ENCODE measurements at regions of chr21 and their contacts with region 1.

Region 1: DNA sequence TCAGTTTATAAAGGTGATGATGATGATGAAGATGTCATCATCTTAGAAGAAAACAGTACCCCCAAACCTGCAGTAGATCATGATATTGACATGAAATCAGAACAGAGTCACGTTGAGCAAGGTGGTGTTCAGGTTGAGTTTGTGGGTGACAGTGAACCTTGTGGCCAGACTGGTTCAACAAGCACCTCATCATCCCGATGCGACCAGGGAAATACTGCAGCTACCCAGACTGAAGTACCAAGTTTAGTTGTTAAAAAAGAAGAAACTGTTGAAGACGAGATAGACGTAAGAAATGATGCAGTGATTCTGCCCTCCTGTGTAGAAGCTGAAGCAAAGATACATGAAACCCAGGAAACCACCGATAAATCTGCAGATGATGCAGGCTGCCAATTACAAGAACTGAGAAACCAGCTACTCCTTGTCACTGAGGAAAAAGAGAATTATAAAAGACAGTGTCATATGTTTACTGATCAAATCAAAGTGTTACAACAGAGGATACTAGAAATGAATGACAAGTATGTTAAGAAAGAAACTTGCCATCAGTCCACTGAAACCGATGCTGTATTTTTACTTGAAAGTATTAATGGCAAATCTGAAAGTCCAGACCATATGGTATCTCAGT is 16.0 kb upstream of the CHAF1B start:
- DNase-seq: no peak
- ATAC-seq: no peak
- H3K4me3 ChIP-seq: no peak overlapping the region
- H3K27ac ChIP-seq: no peak overlapping the region
- H3K4me1 ChIP-seq: no peaks in the 10 kb centered on the region
- H3K27me3 ChIP-seq: no peaks in the 10 kb centered on the region
- CTCF ChIP-seq: no peak
- EP300 ChIP-seq: no peak
- POLR2A ChIP-seq: no peak
- RAD21 ChIP-seq: no peak

Region 2: DNA sequence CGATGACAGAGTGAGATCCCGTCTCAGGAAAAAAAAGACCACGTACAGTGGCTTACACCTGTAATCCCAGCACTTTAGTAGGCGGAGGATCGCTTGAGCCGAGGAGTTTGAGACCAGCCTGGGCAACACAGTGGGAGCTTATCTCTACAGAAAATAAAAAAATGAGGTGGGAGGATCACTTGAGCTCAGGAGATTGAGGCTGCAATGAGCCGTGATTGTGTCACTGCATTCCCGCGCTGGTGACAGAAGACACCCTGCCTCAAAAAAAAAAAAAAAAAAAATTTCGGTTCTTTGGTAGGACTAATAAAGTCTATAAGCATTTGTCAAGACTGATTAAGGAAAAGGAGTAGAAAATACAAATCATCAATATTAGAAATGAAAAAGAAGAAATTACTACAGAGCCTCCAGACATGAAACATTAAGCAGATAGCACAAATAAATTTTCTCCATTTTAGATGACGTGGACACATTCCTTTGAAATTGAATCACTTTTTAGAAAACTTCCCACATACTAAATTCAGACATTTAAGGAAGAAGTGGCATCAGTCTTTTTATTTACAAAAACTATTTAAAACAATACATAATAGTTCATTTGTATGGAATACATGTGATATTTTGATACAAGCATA is 18.8 kb before region 1 on chr21:
- CTCF ChIA-PET with region 1: no interaction called
- POLR2A ChIA-PET with region 1: interaction called, 16 read pairs
- in situ Hi-C with region 1: no loop called
- intact Hi-C with region 1: no loop called
- DNase-seq: no peak
- ATAC-seq: peak; percentile 37; the same call in 2 of the 3 replicates
- H3K4me3 ChIP-seq: no peak overlapping the region
- H3K27ac ChIP-seq: no peak overlapping the region
- H3K4me1 ChIP-seq: no peaks in the 10 kb centered on the region
- H3K27me3 ChIP-seq: no peaks in the 10 kb centered on the region
- CTCF ChIP-seq: no peak
- EP300 ChIP-seq: no peak
- POLR2A ChIP-seq: no peak
- RAD21 ChIP-seq: no peak

Region 3: DNA sequence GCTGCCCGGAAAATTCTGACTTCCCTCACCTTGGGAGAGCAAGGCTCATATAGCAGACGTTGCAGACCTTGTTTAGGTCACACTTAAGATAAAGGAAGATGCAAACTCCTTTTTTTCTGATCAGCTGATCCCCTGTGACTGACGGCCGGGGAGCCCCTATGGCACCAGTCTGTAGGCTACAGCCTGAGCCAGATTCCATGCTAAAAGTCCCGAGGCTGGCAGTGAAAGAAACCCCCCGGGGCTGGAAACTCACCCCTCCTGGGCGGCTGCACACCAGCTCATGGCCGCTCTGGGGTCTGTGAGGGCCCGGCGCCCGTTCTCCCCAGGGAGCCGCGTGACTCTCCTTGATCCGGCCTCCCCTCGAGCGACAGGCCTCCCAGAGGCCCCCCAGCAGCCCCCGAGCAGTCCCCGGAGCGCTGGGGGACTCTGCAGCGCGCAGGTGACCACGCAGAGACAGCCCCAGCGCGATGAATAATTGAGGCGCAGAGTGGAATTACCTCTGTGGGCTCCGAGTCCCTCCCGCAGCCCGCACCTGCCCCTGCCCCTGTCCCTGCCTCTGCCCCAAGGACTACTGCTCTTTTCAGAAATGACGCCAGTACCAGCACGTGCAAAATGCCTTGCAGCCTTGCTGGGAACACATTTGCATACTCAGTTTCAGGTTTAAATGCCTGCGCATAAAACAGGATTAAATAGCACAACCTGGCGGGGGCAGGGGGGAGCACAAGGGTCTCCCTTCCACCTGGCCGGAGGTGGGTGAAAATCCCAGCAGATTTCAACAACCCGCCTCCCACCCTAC is 173.3 kb after region 1 on chr21:
- CTCF ChIA-PET with region 1: no interaction called
- POLR2A ChIA-PET with region 1: no interaction called
- in situ Hi-C with region 1: no loop called
- intact Hi-C with region 1: no loop called
- DNase-seq: no peak
- ATAC-seq: no peak; the same call in 1 of the 3 replicates
- H3K4me3 ChIP-seq: no peak overlapping the region
- H3K27ac ChIP-seq: no peak overlapping the region
- H3K4me1 ChIP-seq: no peaks in the 10 kb centered on the region
- H3K27me3 ChIP-seq: peaks cover 40 to 50% of the 10 kb centered on the region in 2 experiments
- CTCF ChIP-seq: peak in 2 of 3 experiments; percentile 9 to 25; a peak in 1 of 6 replicates
- EP300 ChIP-seq: no peak
- POLR2A ChIP-seq: no peak
- RAD21 ChIP-seq: no peak

Measured in K562 (cell line).